ENCODE measurements at regions of chr11 and their contacts with region 1.

Region 1: DNA sequence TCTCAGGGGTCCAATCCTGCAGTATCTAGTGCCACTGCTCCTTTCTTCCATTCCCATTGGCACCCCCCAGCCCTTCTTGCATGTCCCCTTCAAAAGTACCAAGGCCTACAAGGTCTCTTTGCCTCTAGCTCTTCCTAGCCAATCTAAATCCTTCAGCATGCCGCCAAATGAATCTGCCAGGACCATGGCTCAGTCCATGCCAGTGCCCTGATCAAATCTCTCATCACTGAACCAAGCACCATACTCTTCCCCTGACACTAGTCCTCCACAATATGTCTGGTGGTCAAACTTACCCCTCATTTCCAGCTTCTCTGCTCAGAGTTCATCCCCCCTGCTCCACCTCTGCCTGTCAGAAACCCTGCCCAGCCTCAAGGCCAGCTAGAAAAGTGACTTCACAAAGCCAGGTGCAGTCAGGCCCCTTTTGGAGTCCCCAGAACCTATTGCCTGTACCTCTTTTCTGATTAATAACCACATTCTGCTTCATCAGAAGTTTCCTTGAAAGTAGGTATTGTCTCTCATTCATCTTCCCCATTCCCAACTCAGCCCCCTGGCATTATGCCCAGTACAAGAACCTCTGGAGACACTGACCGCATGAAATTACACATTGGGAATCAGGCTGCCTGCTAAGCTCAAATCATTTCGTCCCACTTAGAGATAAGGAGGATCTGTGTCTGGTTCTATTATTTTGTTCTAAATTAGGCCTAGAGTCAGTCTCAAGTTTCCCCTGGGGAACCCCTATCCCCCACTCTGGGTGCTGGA is 11.4 kb downstream of the FEN1 start:
- DNase-seq: no peak

Region 2: GRCh38 chr11:61851113-61851899 is 47.2 kb after region 1 on chr11:
- intact Hi-C with region 1: loop called (anchors 5 kb)
- DNase-seq: peak in 2 of 10 donors; percentile 39 to 78

Measured in posterior cingulate gyrus (tissue), 11 donors.